Heart right ventricle (tissue), 16 donors: ENCODE measurements at regions of chr13 and their contacts with region 1.

Region 1: DNA sequence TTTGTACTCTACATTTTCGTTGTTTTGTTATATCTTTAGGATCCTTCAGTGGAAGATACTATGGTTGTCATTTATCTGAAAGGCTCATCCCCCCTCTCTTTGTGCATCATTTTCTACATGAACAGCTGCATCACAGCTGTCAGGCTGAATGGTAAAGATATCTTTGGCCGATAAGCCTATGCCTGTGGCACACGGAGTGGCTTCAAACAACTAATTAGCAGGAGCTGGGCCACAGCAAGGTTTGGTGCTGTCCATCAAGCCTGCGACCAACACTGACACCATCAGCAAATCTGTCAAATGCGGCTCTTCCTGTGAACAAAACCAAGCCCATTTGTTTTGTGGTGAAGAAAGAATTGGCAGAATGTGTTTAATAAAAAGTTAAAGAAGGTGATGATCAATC is 334.4 kb downstream of the PCDH9 start:
- DNase-seq: no peak
- ATAC-seq: no peak
- H3K4me3 ChIP-seq: no peak overlapping the region
- H3K27ac ChIP-seq: no peak overlapping the region
- H3K4me1 ChIP-seq: no peaks in the 10 kb centered on the region
- H3K27me3 ChIP-seq: no peaks in the 10 kb centered on the region
- CTCF ChIP-seq: no peak

Region 2: GRCh38 chr13:66994097-66994496 is 98.3 kb after region 1 on chr13:
- intact Hi-C with region 1: loop called in 1 of 10 experiments (anchors 10 kb)
- DNase-seq: peak; percentile 50 to 75
- ATAC-seq: peak; percentile 91 to 99 (median 96)
- H3K4me3 ChIP-seq: peak overlapping the region in 9 of 10 donors; percentile 11 to 49 (median 42)
- H3K27ac ChIP-seq: peak overlapping the region in 1 of 10 donors; percentile 22
- H3K4me1 ChIP-seq: peaks cover 0 to 14% (median 6%) of the 10 kb centered on the region in 9 donors
- H3K27me3 ChIP-seq: no peaks in the 10 kb centered on the region
- CTCF ChIP-seq: peak in 8 of 9 donors; percentile 24 to 75 (median 64)